Activated T-helper 1 cell treated with anti-CD3 and anti-CD28 coated beads, Interleukin-12 subunit alpha, Interleukin-12 subunit beta, Interleukin-2, Interleukin-4 antibody, amounts not matched to agents 30 ng/mL and 10 ng/mL and 1 ng/mL, durations not matched to agents 14 hours and 24 hours and 36 hours (primary cell): ENCODE measurements at regions of chr6 and their contacts with region 1.

Region 1: DNA sequence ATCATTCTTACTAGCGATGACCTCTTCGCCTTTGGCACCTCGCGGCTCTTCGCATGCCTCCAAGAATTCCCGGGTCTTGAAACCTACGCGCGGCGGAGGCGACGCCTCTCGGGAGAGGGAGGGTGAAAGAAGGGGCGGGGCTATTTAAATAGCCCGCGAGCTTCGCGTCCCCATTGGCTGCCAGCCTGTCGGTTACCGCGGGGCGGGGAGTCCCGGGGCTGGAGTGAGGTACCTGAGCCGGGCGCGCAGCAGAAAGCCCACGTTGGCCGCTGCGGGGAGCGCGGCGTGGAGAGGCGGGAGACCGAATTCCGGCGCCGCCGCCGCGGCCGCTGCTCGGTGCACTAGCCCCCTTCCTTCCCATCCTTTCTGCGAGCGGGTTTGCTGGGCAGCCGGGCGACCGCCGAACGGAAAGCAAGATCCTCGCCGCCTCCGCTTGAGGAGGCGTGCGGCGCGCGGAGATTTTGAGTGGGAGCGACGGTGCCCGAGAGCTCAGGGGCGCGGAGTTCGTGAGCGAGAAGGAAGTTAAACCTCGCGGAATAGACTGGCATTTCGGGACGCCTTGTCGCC is at the start of gene BMP6:
- DNase-seq: peak; percentile 71
- H3K4me3 Mint-ChIP-seq: peak within 1 kb of the TSS; percentile 80
- H3K27ac Mint-ChIP-seq: no peak within 1 kb of the TSS
- H3K4me1 Mint-ChIP-seq: peaks cover 17% of the 10 kb centered on the region
- H3K27me3 Mint-ChIP-seq: peaks cover 68% of the 10 kb centered on the region
- total RNA-seq, gene BMP6: 0.86 and 1.1 TPM in 2 replicates

Region 2: DNA sequence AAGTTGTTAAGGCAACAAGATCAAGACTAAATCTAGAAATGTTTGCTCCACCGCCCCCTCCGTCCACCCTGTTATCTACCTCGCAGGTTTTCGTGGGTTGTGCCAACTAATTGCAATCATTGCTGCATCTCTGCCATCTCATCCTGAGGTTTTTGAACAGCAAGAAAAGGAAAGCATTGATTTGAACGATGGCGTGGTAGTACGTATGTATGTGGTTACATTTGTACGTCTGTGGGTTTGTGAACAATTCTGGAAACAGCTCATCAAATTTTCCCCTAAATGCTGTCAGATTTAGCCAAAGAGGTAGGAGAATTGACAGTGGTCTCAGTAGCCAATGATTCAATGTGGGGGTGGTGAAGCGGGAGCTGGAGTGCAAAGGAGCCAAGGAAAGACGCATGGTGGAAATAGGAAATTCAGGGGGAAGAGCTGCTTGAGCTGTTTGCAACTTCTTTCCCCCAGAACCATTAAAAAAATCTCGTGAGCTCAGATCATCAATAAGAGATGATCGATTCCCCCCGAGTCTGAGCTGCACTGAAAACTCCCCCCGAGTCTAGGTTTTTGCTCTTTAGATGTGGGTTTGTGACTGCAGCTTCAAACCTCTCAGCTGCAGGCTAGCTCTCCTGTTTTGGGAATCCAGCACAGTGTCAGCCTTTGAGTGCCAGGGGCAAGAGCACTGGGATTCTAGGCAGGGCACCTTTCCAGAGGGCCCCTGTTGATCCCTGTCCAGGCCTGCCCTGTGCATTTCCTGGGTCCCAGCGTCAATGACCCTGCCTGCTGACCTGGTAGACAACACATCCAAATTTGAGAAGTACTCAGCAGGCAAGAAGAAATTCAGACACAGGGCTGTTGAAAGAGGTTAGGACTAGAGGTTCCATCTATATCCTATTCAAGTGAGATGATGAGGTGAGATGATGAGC is 1210.0 kb before region 1 on chr6:
- intact Hi-C with region 1: loop called (anchors 10 kb)
- DNase-seq: peak; percentile 38
- H3K4me3 Mint-ChIP-seq: no peak overlapping the region
- H3K27ac Mint-ChIP-seq: peak overlapping the region; percentile 21
- H3K4me1 Mint-ChIP-seq: peaks cover 18% of the 10 kb centered on the region
- H3K27me3 Mint-ChIP-seq: peaks cover 80% of the 10 kb centered on the region

Region 3: DNA sequence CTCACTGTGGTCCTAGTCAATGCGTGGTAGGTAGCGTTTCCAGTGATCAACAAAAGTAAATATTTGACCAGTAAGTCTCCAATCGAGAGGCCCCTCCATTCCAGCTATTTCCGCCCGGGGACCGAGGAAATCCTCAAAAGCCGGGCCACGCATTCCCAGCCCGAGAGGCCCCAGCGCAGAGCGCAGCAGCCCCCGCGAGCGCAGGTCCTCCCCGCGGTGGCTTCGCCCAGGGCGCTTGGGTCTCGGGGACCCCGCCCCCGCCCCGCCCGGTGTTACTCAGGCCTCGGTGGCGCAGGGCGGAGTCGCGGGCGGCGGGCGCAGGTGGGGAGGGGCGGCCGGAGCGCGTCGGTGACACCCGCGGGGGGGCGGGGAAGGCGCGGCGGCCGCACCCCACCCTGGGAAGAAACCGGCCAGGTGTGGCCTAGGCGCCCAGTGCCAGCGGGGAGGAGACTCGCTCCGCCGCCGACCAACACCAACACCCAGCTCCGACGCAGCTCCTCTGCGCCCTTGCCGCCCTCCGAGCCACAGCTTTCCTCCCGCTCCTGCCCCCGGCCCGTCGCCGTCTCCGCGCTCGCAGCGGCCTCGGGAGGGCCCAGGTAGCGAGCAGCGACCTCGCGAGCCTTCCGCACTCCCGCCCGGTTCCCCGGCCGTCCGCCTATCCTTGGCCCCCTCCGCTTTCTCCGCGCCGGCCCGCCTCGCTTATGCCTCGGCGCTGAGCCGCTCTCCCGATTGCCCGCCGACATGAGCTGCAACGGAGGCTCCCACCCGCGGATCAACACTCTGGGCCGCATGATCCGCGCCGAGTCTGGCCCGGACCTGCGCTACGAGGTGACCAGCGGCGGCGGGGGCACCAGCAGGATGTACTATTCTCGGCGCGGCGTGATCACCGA is 184.5 kb before region 1 on chr6 and contains the start of gene DSP:
- intact Hi-C with region 1: loop called (anchors 5 kb)
- DNase-seq: peak; percentile 3
- H3K4me3 Mint-ChIP-seq: peak within 1 kb of the TSS; percentile 82
- H3K27ac Mint-ChIP-seq: no peak within 1 kb of the TSS
- H3K4me1 Mint-ChIP-seq: peaks cover 6% of the 10 kb centered on the region
- H3K27me3 Mint-ChIP-seq: peaks cover 73% of the 10 kb centered on the region
- total RNA-seq, gene DSP: not detected in 2 replicates

Region 4: GRCh38 chr6:7819431-7820015 is 93.6 kb after region 1 on chr6:
- intact Hi-C with region 1: no loop called
- DNase-seq: no peak
- H3K4me3 Mint-ChIP-seq: no peak overlapping the region
- H3K27ac Mint-ChIP-seq: no peak overlapping the region
- H3K4me1 Mint-ChIP-seq: no peaks in the 10 kb centered on the region
- H3K27me3 Mint-ChIP-seq: peaks cover 2% of the 10 kb centered on the region

Region 5: GRCh38 chr6:7910654-7911344 is 184.9 kb after region 1 on chr6 and contains the start of gene TXNDC5:
- intact Hi-C with region 1: loop called (anchors 2 kb)
- DNase-seq: peak; percentile 68
- H3K4me3 Mint-ChIP-seq: peak within 1 kb of the TSS; percentile 87
- H3K27ac Mint-ChIP-seq: peak within 1 kb of the TSS; percentile 64
- H3K4me1 Mint-ChIP-seq: peaks cover 20% of the 10 kb centered on the region
- H3K27me3 Mint-ChIP-seq: no peaks in the 10 kb centered on the region
- total RNA-seq, gene TXNDC5: 119 and 121 TPM in 2 replicates

Region 6: GRCh38 chr6:8006208-8006607 is 280.3 kb after region 1 on chr6:
- intact Hi-C with region 1: loop called (anchors 1 kb)
- DNase-seq: no peak
- H3K4me3 Mint-ChIP-seq: no peak overlapping the region
- H3K27ac Mint-ChIP-seq: no peak overlapping the region
- H3K4me1 Mint-ChIP-seq: no peaks in the 10 kb centered on the region
- H3K27me3 Mint-ChIP-seq: peaks cover 3% of the 10 kb centered on the region

Region 7: GRCh38 chr6:8219352-8219943 is 493.5 kb after region 1 on chr6:
- intact Hi-C with region 1: loop called (anchors 1 kb)
- DNase-seq: peak; percentile 5
- H3K4me3 Mint-ChIP-seq: no peak overlapping the region
- H3K27ac Mint-ChIP-seq: no peak overlapping the region
- H3K4me1 Mint-ChIP-seq: no peaks in the 10 kb centered on the region
- H3K27me3 Mint-ChIP-seq: no peaks in the 10 kb centered on the region